ENCODE measurements at regions of chr6 and their contacts with region 1.

Region 1: DNA sequence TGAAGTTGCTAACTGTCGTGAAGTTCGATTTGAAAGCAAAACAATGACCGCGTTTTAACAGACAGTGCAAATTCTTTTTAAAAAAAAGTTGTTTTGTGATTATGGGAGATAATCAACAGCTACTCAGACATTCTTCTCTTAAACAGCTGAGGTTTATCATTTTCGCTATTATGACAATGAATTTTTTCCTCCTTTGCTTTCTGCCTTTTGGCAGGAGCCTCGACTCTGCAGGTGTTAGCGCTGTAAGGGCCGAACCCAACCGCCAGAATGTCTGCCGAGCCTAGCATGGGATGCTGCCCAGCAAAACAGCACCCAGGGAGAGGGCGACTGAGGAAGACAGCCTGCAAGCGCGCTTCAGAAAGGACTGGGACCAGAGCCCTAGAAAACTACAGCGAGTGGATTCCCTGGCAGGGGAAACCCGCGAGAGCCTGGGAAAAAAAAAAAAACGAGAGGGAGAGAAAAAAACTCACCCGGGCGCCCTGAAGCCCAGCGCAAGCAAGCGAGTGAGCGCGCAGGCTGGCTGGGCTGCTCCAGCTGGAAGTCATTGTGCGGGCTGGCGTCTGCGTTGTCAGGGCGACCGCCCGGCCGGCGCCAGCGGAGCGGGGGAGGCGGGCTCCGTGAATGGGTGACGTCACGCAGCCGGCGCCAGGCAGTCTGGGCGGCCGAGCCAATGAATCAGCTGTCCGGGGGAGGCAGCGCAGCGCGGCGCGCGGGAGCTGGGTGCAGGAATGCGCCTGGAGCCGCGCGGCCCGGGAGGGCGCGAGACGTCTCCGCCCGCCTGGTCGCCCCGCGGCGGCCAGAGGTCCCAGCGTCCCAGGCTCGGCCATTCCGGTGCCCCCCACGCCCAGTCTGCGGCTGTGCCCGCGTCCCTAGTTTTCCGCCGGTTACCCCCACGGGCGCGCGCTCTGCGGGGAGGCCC is 32.7 kb upstream of the ID4 start:
- DNase-seq: peak; percentile 95 to 97
- ATAC-seq: peak; percentile 96 to 100 (median 99)
- H3K4me3 ChIP-seq: peak overlapping the region; percentile 11 to 76 (median 60)
- H3K27ac ChIP-seq: peak overlapping the region; percentile 79 to 98 (median 96)
- H3K4me1 ChIP-seq: peaks cover 0 to 26% (median 15%) of the 10 kb centered on the region in 9 donors
- H3K27me3 ChIP-seq: peaks cover 0 to 18% (median 0%) of the 10 kb centered on the region in 7 donors
- CTCF ChIP-seq: no peak

Region 2: DNA sequence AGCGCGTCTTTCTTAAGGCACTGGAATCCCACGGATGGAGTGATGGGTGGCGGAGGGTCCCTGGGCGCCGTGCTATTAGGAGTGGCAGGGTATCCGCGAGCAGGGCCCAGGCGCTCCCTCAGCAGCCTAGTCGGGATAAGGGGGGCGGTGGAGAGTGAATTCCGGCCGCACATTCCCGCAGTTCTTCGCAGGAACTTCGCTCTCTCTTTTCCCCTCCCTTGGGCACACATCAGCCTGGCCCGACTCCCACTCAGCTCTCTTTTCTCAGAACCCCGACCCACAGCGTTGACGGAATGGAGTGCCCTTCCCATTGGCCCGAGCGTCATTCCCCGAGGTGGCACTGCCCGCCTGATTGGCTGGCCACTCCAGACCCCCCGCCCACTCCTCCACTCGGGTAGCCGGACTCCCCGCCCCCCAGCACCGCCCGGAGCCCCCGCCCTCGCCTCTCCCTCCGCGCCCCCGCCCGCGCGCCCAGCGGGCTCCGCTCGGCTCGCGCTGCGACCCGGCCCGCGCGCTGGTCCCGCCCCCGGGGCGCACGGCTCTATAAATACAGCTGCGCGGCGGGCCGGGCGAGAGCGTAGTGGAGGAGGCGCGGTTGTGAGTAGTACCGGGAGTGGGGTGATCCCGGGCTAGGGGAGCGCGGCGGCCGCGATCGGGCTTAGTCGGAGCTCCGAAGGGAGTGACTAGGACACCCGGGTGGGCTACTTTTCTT is 32.5 kb after region 1 on chr6 and contains the start of gene ID4:
- intact Hi-C with region 1: loop called in 5 of 10 experiments (anchors 2 to 5 kb)
- DNase-seq: peak; percentile 92 to 93
- ATAC-seq: peak; percentile 92 to 97 (median 94)
- H3K4me3 ChIP-seq: peak within 1 kb of the TSS; percentile 59 to 76 (median 70)
- H3K27ac ChIP-seq: peak within 1 kb of the TSS; percentile 50 to 82 (median 74)
- H3K4me1 ChIP-seq: peaks cover 0 to 23% (median 11%) of the 10 kb centered on the region in 9 donors
- H3K27me3 ChIP-seq: peaks cover 0 to 86% (median 42%) of the 10 kb centered on the region in 7 donors
- CTCF ChIP-seq: no peak
- total RNA-seq, gene ID4: 1.2 to 4.8 (median 2.9) TPM

Measured in heart right ventricle (tissue), 16 donors.